ENCODE measurements at regions of chr11 and their contacts with region 1.

Region 1: DNA sequence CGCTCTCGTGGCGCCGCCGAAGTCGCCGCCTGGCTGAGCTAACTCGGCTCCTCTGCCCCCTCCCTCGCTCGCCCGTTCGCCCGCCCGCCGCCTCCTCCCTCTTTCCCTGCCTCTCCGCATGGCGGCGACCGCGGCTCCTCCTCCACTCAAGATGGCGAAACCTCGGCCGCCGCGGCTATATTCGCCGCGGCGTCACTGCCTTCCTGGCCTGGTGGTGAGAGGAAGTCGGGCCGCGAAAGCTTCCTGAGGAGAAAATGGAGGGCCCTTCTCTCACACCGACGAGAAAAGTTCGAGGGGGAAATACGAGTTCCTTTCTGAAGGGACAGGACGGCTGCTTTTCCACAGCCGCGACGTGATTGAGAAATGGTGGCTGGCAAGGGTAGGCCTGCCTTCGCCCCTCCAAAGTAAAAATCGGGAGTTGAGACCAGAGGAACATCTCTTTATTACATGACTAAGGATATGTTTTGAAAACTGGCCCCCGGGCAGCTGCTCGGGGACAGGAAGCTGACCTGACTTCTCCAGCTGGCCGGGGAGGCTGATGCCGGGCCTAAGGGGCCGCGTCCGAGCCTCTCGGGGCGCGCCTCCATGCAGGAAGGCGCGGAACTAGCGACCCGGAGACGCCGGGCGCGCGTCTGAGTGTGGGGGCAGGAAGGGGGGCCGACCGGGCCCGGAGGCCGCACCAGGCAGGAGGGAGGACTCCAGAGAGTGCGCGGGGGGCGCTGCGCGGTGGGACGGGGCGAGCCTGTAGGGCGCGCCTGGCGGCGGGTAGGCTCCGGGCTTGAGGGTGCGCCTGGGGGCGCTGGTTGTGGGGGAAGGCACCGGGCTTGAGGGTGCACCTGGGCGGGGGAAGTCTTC is at the start of gene DDX6:
- DNase-seq: peak; percentile 59 to 96
- H3K4me3 ChIP-seq: peak within 1 kb of the TSS; percentile 73 to 92
- H3K27ac ChIP-seq: peak within 1 kb of the TSS; percentile 98 to 100
- H3K4me1 ChIP-seq: peaks cover under 1 to 12% of the 10 kb centered on the region in 2 donors
- H3K27me3 ChIP-seq: no peaks in the 10 kb centered on the region
- CTCF ChIP-seq: peak; percentile 41 to 56 (median 46)
- total RNA-seq, gene DDX6: 25.9 TPM

Region 2: DNA sequence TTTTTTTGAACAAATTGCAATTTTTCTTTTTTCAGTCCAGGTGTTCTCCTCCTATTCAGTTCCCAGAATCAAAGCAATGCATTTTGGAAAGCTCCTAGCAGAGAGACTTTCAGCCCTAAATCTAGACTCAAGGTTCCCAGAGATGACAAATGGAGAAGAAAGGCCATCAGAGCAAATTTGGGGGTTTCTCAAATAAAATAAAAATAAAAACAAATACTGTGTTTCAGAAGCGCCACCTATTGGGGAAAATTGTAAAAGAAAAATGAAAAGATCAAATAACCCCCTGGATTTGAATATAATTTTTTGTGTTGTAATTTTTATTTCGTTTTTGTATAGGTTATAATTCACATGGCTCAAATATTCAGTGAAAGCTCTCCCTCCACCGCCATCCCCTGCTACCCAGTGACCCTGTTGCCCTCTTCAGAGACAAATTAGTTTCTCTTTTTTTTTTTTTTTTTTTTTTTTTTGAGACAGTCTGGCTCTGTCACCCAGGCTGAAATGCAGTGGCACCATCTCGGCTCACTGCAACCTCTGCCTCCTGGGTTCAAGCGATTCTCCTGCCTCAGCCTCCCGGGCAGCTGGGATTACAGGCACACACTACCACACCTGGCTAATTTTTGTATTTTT is 438.1 kb before region 1 on chr11:
- intact Hi-C with region 1: no loop called
- DNase-seq: no peak
- H3K4me3 ChIP-seq: no peak overlapping the region
- H3K27ac ChIP-seq: no peak overlapping the region
- H3K4me1 ChIP-seq: no peaks in the 10 kb centered on the region
- H3K27me3 ChIP-seq: no peaks in the 10 kb centered on the region
- CTCF ChIP-seq: peak in 2 of 3 experiments; percentile 41 to 51

Region 3: GRCh38 chr11:118621071-118621783 is 170.1 kb before region 1 on chr11:
- intact Hi-C with region 1: loop called (anchors 5 kb)
- DNase-seq: peak in 1 of 2 donors; percentile 95
- H3K4me3 ChIP-seq: peak overlapping the region; percentile 73
- H3K27ac ChIP-seq: peak overlapping the region; percentile 95 to 99
- H3K4me1 ChIP-seq: peaks cover 31 to 67% of the 10 kb centered on the region in 2 donors
- H3K27me3 ChIP-seq: no peaks in the 10 kb centered on the region
- CTCF ChIP-seq: no peak

Region 4: GRCh38 chr11:118820412-118821357 is 29.3 kb after region 1 on chr11:
- intact Hi-C with region 1: loop called (anchors 1 kb)
- DNase-seq: peak; percentile 64 to 95
- H3K4me3 ChIP-seq: no peak overlapping the region
- H3K27ac ChIP-seq: peak overlapping the region; percentile 56 to 66
- H3K4me1 ChIP-seq: peaks cover 0 to 8% of the 10 kb centered on the region in 2 donors
- H3K27me3 ChIP-seq: no peaks in the 10 kb centered on the region
- CTCF ChIP-seq: no peak

Region 5: GRCh38 chr11:118870396-118871345 is 79.3 kb after region 1 on chr11:
- intact Hi-C with region 1: loop called (anchors 1 kb)
- DNase-seq: peak in 1 of 2 donors; percentile 89
- H3K4me3 ChIP-seq: peak overlapping the region; percentile 28 to 42
- H3K27ac ChIP-seq: peak overlapping the region; percentile 90
- H3K4me1 ChIP-seq: peaks cover 5 to 15% of the 10 kb centered on the region in 2 donors
- H3K27me3 ChIP-seq: no peaks in the 10 kb centered on the region
- CTCF ChIP-seq: peak in 1 of 3 experiments; percentile 29

Region 6: GRCh38 chr11:118907051-118908042 is 116.0 kb after region 1 on chr11:
- intact Hi-C with region 1: loop called (anchors 5 kb)
- DNase-seq: peak in 1 of 2 donors; percentile 93
- H3K4me3 ChIP-seq: peak overlapping the region in 1 of 2 donors; percentile 9
- H3K27ac ChIP-seq: peak overlapping the region; percentile 73 to 97
- H3K4me1 ChIP-seq: peaks cover 14 to 54% of the 10 kb centered on the region in 2 donors
- H3K27me3 ChIP-seq: no peaks in the 10 kb centered on the region
- CTCF ChIP-seq: peak; percentile 85 to 97 (median 95)